MCF 10A (cell line): ENCODE measurements at regions of chr10 and their contacts with region 1.

Region 1: GRCh38 chr10:92074126-92074887 is 150.7 kb downstream of the BTAF1 start:
- DNase-seq: peak; percentile 29
- H3K4me3 Mint-ChIP-seq: no peak overlapping the region
- H3K27ac Mint-ChIP-seq: no peak overlapping the region
- H3K4me1 Mint-ChIP-seq: peaks cover 7% of the 10 kb centered on the region
- H3K27me3 Mint-ChIP-seq: no peaks in the 10 kb centered on the region
- CTCF ChIP-seq: peak; percentile 30

Region 2: GRCh38 chr10:92052741-92053140 is 21.6 kb before region 1 on chr10:
- CTCF ChIA-PET with region 1: interaction called, 3 read pairs
- POLR2A ChIA-PET with region 1: interaction called, 3 read pairs
- intact Hi-C with region 1: loop called (anchors 1 kb)
- DNase-seq: no peak
- H3K4me3 Mint-ChIP-seq: no peak overlapping the region
- H3K27ac Mint-ChIP-seq: no peak overlapping the region
- H3K4me1 Mint-ChIP-seq: no peaks in the 10 kb centered on the region
- H3K27me3 Mint-ChIP-seq: no peaks in the 10 kb centered on the region
- CTCF ChIP-seq: no peak

Region 3: GRCh38 chr10:92087750-92088395 is 13.6 kb after region 1 on chr10:
- CTCF ChIA-PET with region 1: interaction called, 17 read pairs
- POLR2A ChIA-PET with region 1: interaction called, 3 read pairs
- intact Hi-C with region 1: no loop called
- DNase-seq: peak; percentile 89
- H3K4me3 Mint-ChIP-seq: no peak overlapping the region
- H3K27ac Mint-ChIP-seq: no peak overlapping the region
- H3K4me1 Mint-ChIP-seq: peaks cover 6% of the 10 kb centered on the region
- H3K27me3 Mint-ChIP-seq: no peaks in the 10 kb centered on the region
- CTCF ChIP-seq: peak; percentile 94